ENCODE measurements at regions of chr17 and their contacts with region 1.

Region 1: GRCh38 chr17:82528484-82529265 is 9.1 kb downstream of the FOXK2 start:
- DNase-seq: peak in 1 of 2 donors; percentile 30
- ATAC-seq: peak; percentile 43 to 72 (median 60)
- H3K4me3 ChIP-seq: no peak overlapping the region
- H3K4me3 Mint-ChIP-seq: peak overlapping the region; percentile 2
- H3K27ac ChIP-seq: no peak overlapping the region
- H3K27ac Mint-ChIP-seq: peak overlapping the region; percentile 79 to 82
- H3K4me1 ChIP-seq: peaks cover 29% of the 10 kb centered on the region
- H3K4me1 Mint-ChIP-seq: peaks cover 47 to 55% of the 10 kb centered on the region in 2 donors
- H3K27me3 ChIP-seq: no peaks in the 10 kb centered on the region
- H3K27me3 Mint-ChIP-seq: no peaks in the 10 kb centered on the region
- CTCF ChIP-seq: no peak

Region 2: GRCh38 chr17:82577300-82577699 is 48.6 kb after region 1 on chr17:
- intact Hi-C with region 1: loop called (anchors 5 kb)
- DNase-seq: no peak
- ATAC-seq: no peak
- H3K4me3 ChIP-seq: no peak overlapping the region
- H3K4me3 Mint-ChIP-seq: no peak overlapping the region
- H3K27ac ChIP-seq: no peak overlapping the region
- H3K27ac Mint-ChIP-seq: no peak overlapping the region
- H3K4me1 ChIP-seq: no peaks in the 10 kb centered on the region
- H3K4me1 Mint-ChIP-seq: peaks cover 0 to 5% of the 10 kb centered on the region in 2 donors
- H3K27me3 ChIP-seq: no peaks in the 10 kb centered on the region
- H3K27me3 Mint-ChIP-seq: no peaks in the 10 kb centered on the region
- CTCF ChIP-seq: no peak

Measured in natural killer cell (primary cell).